ENCODE measurements at regions of chr6 and their contacts with region 1.

Region 1: GRCh38 chr6:47153032-47153755 is 111.1 kb upstream of the ADGRF1 start:
- DNase-seq: peak; percentile 65 to 99
- H3K4me3 ChIP-seq: no peak overlapping the region
- H3K27ac ChIP-seq: peak overlapping the region; percentile 97
- H3K4me1 ChIP-seq: peaks cover 60% of the 10 kb centered on the region
- H3K27me3 ChIP-seq: no peaks in the 10 kb centered on the region
- CTCF ChIP-seq: no peak

Region 2: GRCh38 chr6:47111685-47112084 is 41.5 kb before region 1 on chr6:
- CTCF ChIA-PET with region 1: no interaction called
- POLR2A ChIA-PET with region 1: interaction called, 4 read pairs
- intact Hi-C with region 1: loop called (anchors 1 kb)
- DNase-seq: peak; percentile 71 to 96
- H3K4me3 ChIP-seq: no peak overlapping the region
- H3K27ac ChIP-seq: peak overlapping the region; percentile 98
- H3K4me1 ChIP-seq: peaks cover 95% of the 10 kb centered on the region
- H3K27me3 ChIP-seq: no peaks in the 10 kb centered on the region
- CTCF ChIP-seq: no peak

Region 3: DNA sequence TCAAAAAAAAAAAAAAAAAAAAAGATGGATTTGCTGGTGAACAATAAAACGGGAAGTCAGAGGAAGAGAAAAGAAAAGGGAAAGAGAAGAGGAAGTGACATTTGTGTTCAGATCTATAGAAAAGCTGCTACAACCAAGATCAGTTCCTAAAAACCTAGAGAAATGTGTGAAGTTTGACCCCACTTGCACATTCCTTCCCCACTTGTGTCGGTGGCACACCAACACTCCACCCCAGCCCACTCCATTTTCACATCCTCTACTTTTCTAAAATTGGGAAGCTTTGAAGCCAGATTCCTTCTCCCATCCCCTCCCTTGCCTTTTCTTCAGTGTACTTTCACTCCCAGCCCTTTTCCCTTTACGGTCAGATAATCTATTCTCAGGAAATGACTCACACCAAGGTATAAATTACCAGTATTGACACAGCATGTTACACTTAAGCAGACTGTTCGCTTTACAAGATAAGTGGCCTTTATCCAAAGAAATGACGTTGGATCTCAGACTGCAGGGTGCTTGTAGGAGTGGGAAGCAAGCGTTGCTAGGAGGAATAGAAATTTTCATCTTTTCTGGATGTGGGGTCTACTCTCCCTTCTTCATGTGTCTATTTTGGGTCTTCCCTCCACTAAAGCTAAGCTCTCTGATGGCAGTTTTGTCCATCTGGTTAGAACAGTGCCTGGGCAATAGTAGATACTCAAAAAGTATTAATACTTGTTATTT is 18.6 kb before region 1 on chr6:
- CTCF ChIA-PET with region 1: no interaction called
- POLR2A ChIA-PET with region 1: interaction called, 4 read pairs
- intact Hi-C with region 1: loop called (anchors 1 kb)
- DNase-seq: peak; percentile 46 to 98
- H3K4me3 ChIP-seq: peak overlapping the region; percentile 43; the same call in 1 of the 2 replicates
- H3K27ac ChIP-seq: peak overlapping the region; percentile 100
- H3K4me1 ChIP-seq: peaks cover 73% of the 10 kb centered on the region
- H3K27me3 ChIP-seq: no peaks in the 10 kb centered on the region
- CTCF ChIP-seq: no peak

Region 4: GRCh38 chr6:47188588-47189021 is 35.4 kb after region 1 on chr6:
- CTCF ChIA-PET with region 1: no interaction called
- POLR2A ChIA-PET with region 1: no interaction called
- intact Hi-C with region 1: loop called (anchors 1 kb)
- DNase-seq: peak; percentile 71 to 99
- H3K4me3 ChIP-seq: 0 out of 2 replicates have a peak overlapping the region, but pooled peaks have one; percentile 2
- H3K27ac ChIP-seq: peak overlapping the region; percentile 93
- H3K4me1 ChIP-seq: peaks cover 56% of the 10 kb centered on the region
- H3K27me3 ChIP-seq: no peaks in the 10 kb centered on the region
- CTCF ChIP-seq: no peak

Region 5: DNA sequence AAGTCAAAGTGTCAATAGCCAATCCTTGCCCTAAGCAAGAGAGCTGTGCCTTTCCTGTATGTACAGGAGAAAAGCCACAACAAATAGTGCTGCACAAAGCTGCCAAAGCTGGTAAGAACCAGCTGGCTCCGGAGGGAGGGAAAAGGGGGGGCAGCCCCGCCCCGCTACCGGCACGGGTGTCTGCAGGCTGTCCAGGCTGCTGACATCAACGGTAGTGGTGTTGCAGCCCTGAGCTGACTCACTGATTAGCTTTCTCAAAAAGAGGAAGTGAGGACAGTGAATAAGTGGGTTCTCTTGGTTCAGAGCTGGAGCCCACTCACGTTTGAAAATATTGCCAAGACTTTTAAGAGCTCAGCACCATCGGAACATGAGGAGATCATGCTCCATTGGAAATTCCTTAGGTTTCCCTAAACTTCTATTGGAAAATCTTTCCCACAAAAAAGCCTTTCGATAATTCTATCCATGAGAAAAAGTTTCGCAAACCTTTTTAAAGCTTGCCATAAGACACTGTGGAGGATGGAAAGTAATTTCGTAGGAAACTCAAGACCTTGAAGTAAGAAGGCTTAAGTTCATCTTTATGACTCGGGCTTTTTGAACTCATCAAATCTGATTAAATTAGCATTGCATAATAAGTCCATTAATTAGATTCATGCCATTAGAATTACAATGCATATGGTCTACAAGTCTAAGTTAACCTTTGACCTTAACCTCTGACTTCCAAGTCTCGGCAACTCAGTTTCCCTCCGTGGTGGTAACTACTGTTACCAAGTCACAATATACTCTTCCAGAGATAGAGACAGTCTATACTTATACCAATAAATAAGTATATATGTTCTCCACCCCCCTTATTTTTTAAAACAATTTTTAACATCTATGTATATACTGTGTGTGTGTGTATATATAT is 89.5 kb after region 1 on chr6:
- CTCF ChIA-PET with region 1: no interaction called
- POLR2A ChIA-PET with region 1: no interaction called
- intact Hi-C with region 1: loop called (anchors 5 kb)
- DNase-seq: peak; percentile 85 to 86
- H3K4me3 ChIP-seq: peak overlapping the region; percentile 14; the same call in 1 of the 2 replicates
- H3K27ac ChIP-seq: peak overlapping the region; percentile 85
- H3K4me1 ChIP-seq: peaks cover 87% of the 10 kb centered on the region
- H3K27me3 ChIP-seq: no peaks in the 10 kb centered on the region
- CTCF ChIP-seq: no peak